Heart right ventricle (tissue), 16 donors: ENCODE measurements at regions of chr14 and their contacts with region 1.

Region 1: GRCh38 chr14:24146978-24147760 is at the start of gene RNF31:
- DNase-seq: peak; percentile 97 to 99
- ATAC-seq: peak; percentile 92 to 98 (median 95)
- H3K4me3 ChIP-seq: peak within 1 kb of the TSS; percentile 75 to 96 (median 84)
- H3K27ac ChIP-seq: peak within 1 kb of the TSS; percentile 79 to 97 (median 94)
- H3K4me1 ChIP-seq: peaks cover 16 to 57% (median 30%) of the 10 kb centered on the region in 9 donors
- H3K27me3 ChIP-seq: no peaks in the 10 kb centered on the region
- CTCF ChIP-seq: no peak
- total RNA-seq, gene RNF31: 27.5 to 52.6 (median 34.8) TPM

Region 2: GRCh38 chr14:23984891-23985602 is 162.1 kb before region 1 on chr14:
- intact Hi-C with region 1: no loop called
- DNase-seq: no peak
- ATAC-seq: peak in 4 of 8 donors; percentile 7 to 44 (median 34)
- H3K4me3 ChIP-seq: no peak overlapping the region
- H3K27ac ChIP-seq: peak overlapping the region in 2 of 10 donors; percentile 5 to 26
- H3K4me1 ChIP-seq: peaks cover 0 to 41% (median 13%) of the 10 kb centered on the region in 9 donors
- H3K27me3 ChIP-seq: no peaks in the 10 kb centered on the region
- CTCF ChIP-seq: no peak

Region 3: GRCh38 chr14:24160850-24161804 is 14.0 kb after region 1 on chr14 and contains the start of gene IRF9:
- intact Hi-C with region 1: loop called in 1 of 10 experiments (anchors 2 kb)
- DNase-seq: peak; percentile 96 to 97
- ATAC-seq: peak; percentile 89 to 97 (median 96)
- H3K4me3 ChIP-seq: peak within 1 kb of the TSS; percentile 50 to 89 (median 66)
- H3K27ac ChIP-seq: peak within 1 kb of the TSS; percentile 92 to 100 (median 96)
- H3K4me1 ChIP-seq: peaks cover 9 to 50% (median 27%) of the 10 kb centered on the region in 9 donors
- H3K27me3 ChIP-seq: no peaks in the 10 kb centered on the region
- CTCF ChIP-seq: peak; percentile 90 to 98 (median 92)
- total RNA-seq, gene IRF9: 17.7 to 147 (median 36.7) TPM

Region 4: DNA sequence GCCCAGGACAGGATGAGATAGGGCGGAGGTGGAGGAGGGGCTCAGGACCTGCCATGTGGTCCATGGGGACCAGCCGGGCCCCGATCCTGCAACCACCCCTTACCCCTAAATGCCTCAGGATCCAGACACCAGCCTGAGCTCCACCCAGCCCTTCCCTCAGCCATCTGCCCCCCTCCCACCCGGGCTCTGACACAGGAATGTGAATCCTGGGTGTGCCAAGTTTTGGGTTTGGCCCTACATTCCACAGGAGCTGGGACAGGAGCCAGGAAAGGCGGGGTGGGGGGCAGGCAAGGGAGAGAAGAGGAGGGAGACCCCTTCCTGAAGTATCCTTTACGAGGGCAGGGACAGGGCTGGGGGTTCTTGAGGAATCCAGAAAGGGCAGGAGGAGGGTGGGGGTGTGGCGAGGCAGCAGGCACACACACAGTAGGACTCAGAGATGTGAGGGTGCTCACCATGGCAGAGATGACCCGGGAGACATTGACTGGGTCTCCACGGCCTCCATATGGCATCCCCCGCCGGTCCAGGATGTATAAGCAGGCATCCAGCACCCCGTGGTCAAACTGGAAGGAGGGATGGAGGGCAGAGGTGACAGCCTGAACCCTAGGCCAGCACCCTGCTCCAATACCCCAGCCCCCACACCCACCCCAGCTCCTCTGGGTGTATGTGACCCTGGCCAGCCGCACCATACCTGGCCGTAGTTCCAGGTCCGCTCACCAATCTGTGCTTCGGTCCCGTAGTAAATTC is 112.3 kb after region 1 on chr14:
- intact Hi-C with region 1: no loop called
- DNase-seq: no peak
- ATAC-seq: peak in 2 of 8 donors; percentile 17 to 22
- H3K4me3 ChIP-seq: no peak overlapping the region
- H3K27ac ChIP-seq: no peak overlapping the region
- H3K4me1 ChIP-seq: no peaks in the 10 kb centered on the region
- H3K27me3 ChIP-seq: no peaks in the 10 kb centered on the region
- CTCF ChIP-seq: no peak